ENCODE measurements at regions of chr20 and their contacts with region 1.

Region 1: GRCh38 chr20:62065669-62066338 is at the start of gene TAF4:
- DNase-seq: peak in 1 of 2 experiments; percentile 80
- H3K4me3 ChIP-seq: peak within 1 kb of the TSS; percentile 51 to 97 (median 72)
- H3K27ac ChIP-seq: peak within 1 kb of the TSS; percentile 87
- H3K4me1 ChIP-seq: peaks cover 5 to 18% (median 14%) of the 10 kb centered on the region in 4 experiments
- H3K27me3 ChIP-seq: no peaks in the 10 kb centered on the region
- CTCF ChIP-seq: no peak
- EP300 ChIP-seq: no peak
- POLR2A ChIP-seq: peak; percentile 78 to 98
- RAD21 ChIP-seq: no peak
- total RNA-seq, gene TAF4: 30.1 and 33.0 TPM in 2 replicates

Region 2: DNA sequence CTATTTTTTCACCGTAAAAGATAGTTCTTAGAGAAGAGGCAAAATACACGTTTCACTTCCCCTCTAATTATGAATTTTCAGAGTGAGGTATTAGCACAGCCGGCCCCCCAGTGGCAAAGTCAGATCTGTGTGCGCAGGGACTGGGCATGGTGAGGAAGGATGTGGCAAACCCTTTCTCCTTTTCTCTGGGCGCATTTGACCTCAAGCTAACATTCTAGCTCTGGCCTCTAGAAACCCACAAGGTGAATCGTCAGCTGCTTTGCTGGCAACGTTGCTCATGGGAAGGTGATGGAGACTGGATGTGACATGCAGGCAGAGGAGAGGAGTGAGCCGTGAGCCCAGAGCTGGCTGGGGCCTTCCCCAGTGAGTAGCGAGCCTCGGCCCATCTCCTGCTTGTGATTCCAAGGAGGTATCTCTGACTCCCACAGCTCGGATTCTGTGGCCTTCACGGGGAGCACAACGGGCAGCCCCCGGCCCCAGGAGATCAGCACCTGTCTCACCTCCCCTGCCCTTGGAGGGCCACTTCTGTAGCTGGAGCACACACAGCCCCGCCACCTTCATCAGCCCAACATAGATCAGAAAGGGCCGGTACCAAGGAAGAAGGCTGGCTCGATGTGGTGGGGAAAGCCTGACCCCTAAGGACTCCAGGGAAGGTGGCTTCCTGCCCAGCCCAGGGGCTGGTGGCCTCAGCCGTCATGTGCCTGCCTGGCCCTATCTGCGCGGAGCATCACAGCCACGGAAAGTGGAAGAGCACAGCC is 153.0 kb before region 1 on chr20:
- CTCF ChIA-PET with region 1: no interaction called
- POLR2A ChIA-PET with region 1: no interaction called
- DNase-seq: no peak
- H3K4me3 ChIP-seq: no peak overlapping the region
- H3K27ac ChIP-seq: no peak overlapping the region
- H3K4me1 ChIP-seq: no peaks in the 10 kb centered on the region
- H3K27me3 ChIP-seq: no peaks in the 10 kb centered on the region; a peak in 1 of 7 replicates
- CTCF ChIP-seq: no peak
- EP300 ChIP-seq: no peak
- POLR2A ChIP-seq: no peak
- RAD21 ChIP-seq: no peak

Region 3: DNA sequence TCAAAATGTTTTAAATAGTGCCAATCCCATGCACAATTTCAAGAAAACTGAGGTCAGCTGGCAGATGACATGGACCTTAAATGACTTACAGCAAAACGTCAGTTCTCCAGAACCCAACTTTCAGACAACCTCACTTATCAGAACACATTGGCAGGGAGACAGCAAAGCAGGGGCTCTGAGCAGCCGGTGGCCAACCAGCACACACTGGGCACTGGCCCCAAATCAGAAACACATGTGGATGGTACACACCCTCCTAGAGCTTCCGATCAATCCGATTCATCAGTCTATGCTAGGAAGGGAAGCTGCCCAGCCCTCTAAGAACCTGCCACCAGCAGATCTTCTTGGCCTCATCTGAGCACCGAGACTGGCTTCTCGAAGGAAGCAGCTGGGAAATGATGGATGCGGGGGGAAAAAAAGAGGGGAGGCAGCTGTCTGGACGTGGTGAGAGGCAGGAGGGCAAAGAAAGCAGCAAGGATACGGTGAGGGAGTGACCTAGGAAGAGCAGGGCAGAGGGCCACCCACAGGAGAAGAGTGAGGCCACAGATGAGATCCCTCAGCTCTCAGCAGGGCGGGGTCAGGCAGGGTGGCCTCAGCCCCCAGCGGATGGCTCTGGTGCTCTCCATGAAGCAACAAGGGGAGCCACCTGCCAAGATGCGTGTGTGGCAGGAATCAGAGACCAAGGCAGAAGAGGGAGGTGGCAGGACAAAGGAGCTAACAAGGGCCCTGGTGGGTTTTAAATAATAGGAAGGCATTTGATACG is 33.0 kb before region 1 on chr20:
- CTCF ChIA-PET with region 1: interaction called, 5 read pairs
- POLR2A ChIA-PET with region 1: interaction called, 21 read pairs
- DNase-seq: no peak
- H3K4me3 ChIP-seq: no peak overlapping the region
- H3K27ac ChIP-seq: no peak overlapping the region
- H3K4me1 ChIP-seq: peaks cover 0 to 16% (median 5%) of the 10 kb centered on the region in 4 experiments; a peak in 6 of 7 replicates
- H3K27me3 ChIP-seq: no peaks in the 10 kb centered on the region
- CTCF ChIP-seq: no peak
- EP300 ChIP-seq: no peak
- POLR2A ChIP-seq: no peak
- RAD21 ChIP-seq: no peak

Region 4: DNA sequence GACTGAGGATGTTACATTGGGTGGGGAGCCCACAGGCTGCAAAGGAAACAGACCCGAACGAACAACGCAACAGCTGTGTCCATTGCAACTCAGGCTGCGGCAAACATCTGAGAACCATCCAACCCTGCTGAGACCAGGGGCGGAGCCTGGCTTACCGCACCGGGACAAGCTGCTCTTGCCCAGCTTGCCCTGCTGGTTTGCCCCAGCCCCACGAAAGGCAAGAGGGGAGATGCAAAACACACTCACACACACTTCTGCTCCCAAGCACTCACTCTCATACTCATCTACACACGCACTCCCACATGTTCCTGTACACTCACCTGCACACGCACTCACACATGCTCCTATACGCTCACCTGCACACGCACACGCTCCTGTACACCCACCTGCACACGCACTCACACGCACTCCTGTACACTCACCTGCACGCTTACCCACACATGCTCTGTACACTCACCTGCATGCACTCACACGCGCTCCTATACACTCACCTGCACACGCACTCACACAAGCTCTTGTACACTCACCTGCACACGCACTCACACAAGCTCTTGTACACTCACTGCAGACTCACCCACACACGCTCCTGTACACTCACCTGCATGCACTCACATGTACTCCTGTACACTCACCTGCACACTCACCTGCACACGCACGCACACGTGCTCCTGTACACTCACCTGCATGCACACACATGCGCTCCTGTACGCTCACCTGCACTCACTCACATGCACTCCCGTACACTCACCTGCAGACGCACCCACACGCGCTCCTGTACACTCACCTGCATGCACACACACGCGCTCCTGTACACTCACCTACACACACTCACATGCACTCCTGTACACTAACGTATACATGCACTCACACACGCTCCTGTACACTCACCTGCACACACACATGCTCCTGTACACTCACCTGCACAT is 21.8 kb after region 1 on chr20:
- CTCF ChIA-PET with region 1: interaction called, 4 read pairs
- POLR2A ChIA-PET with region 1: interaction called, 12 read pairs
- DNase-seq: no peak
- H3K4me3 ChIP-seq: no peak overlapping the region
- H3K27ac ChIP-seq: no peak overlapping the region
- H3K4me1 ChIP-seq: peaks cover 0 to 3% (median 0%) of the 10 kb centered on the region in 4 experiments; a peak in 1 of 7 replicates
- H3K27me3 ChIP-seq: peaks cover 0 to 2% (median 0%) of the 10 kb centered on the region in 4 experiments; a peak in 2 of 7 replicates
- CTCF ChIP-seq: no peak
- EP300 ChIP-seq: no peak
- POLR2A ChIP-seq: no peak
- RAD21 ChIP-seq: no peak

Region 5: GRCh38 chr20:62104791-62105345 is 39.1 kb after region 1 on chr20:
- CTCF ChIA-PET with region 1: interaction called, 3 read pairs
- POLR2A ChIA-PET with region 1: interaction called, 30 read pairs
- DNase-seq: no peak
- H3K4me3 ChIP-seq: no peak overlapping the region
- H3K27ac ChIP-seq: no peak overlapping the region
- H3K4me1 ChIP-seq: no peaks in the 10 kb centered on the region; a peak in 1 of 7 replicates
- H3K27me3 ChIP-seq: peaks cover 0 to 3% (median under 1%) of the 10 kb centered on the region in 4 experiments; a peak in 1 of 7 replicates
- CTCF ChIP-seq: no peak
- EP300 ChIP-seq: no peak
- POLR2A ChIP-seq: no peak
- RAD21 ChIP-seq: no peak

Region 6: GRCh38 chr20:62121776-62122631 is 56.2 kb after region 1 on chr20 and contains the start of gene LSM14B:
- CTCF ChIA-PET with region 1: interaction called, 9 read pairs
- POLR2A ChIA-PET with region 1: interaction called, 125 read pairs
- DNase-seq: peak; percentile 75 to 92
- H3K4me3 ChIP-seq: peak within 1 kb of the TSS; percentile 65 to 98 (median 78)
- H3K27ac ChIP-seq: peak within 1 kb of the TSS; percentile 82; the same call in 1 of the 2 replicates
- H3K4me1 ChIP-seq: peaks cover 4 to 19% (median 7%) of the 10 kb centered on the region in 4 experiments
- H3K27me3 ChIP-seq: no peaks in the 10 kb centered on the region; a peak in 1 of 7 replicates
- CTCF ChIP-seq: no peak
- EP300 ChIP-seq: peak in 1 of 2 experiments; percentile 29; a peak in 1 of 3 replicates
- POLR2A ChIP-seq: peak in 1 of 2 experiments; percentile 60; a peak in 1 of 3 replicates
- RAD21 ChIP-seq: no peak; a peak in 1 of 4 replicates
- total RNA-seq, gene LSM14B: 65.6 and 70.0 TPM in 2 replicates

Region 7: GRCh38 chr20:62143118-62143973 is 77.5 kb after region 1 on chr20 and contains the starts of genes PSMA7 and SS18L1:
- CTCF ChIA-PET with region 1: interaction called, 4 read pairs
- POLR2A ChIA-PET with region 1: interaction called, 14 read pairs
- DNase-seq: peak in 1 of 2 experiments; percentile 87
- H3K4me3 ChIP-seq: peak within 1 kb of the TSS; percentile 63 to 81 (median 67)
- H3K27ac ChIP-seq: peak within 1 kb of the TSS; percentile 95; the same call in 1 of the 2 replicates
- H3K4me1 ChIP-seq: peaks cover 0 to 12% (median 4%) of the 10 kb centered on the region in 4 experiments; a peak in 6 of 7 replicates
- H3K27me3 ChIP-seq: no peaks in the 10 kb centered on the region
- CTCF ChIP-seq: no peak
- EP300 ChIP-seq: peak in 1 of 2 experiments; percentile 85; a peak in 1 of 3 replicates
- POLR2A ChIP-seq: peak in 1 of 2 experiments; percentile 70; a peak in 1 of 3 replicates
- RAD21 ChIP-seq: no peak
- total RNA-seq, gene PSMA7: 339 and 361 TPM in 2 replicates
- total RNA-seq, gene SS18L1: 22.4 and 28.4 TPM in 2 replicates

Measured in H1 (cell line).